CD4-positive, alpha-beta T cell (primary cell): ENCODE measurements at regions of chr22 and their contacts with region 1.

Region 1: GRCh38 chr22:40346178-40347118 is at the start of gene ADSL:
- DNase-seq: peak; percentile 72 to 91 (median 80)
- ATAC-seq: peak; percentile 74
- H3K4me3 ChIP-seq: peak within 1 kb of the TSS; percentile 91
- H3K4me3 Mint-ChIP-seq: peak within 1 kb of the TSS; percentile 96
- H3K27ac ChIP-seq: peak within 1 kb of the TSS; percentile 81 to 89
- H3K27ac Mint-ChIP-seq: peak within 1 kb of the TSS; percentile 98
- H3K4me1 ChIP-seq: peaks cover 65% of the 10 kb centered on the region
- H3K4me1 Mint-ChIP-seq: peaks cover 52% of the 10 kb centered on the region
- H3K27me3 ChIP-seq: no peaks in the 10 kb centered on the region
- H3K27me3 Mint-ChIP-seq: no peaks in the 10 kb centered on the region
- CTCF ChIP-seq: no peak
- total RNA-seq, gene ADSL: 62.9 to 75.3 TPM

Region 2: GRCh38 chr22:40161194-40161593 is 185.3 kb before region 1 on chr22:
- CTCF ChIA-PET with region 1: interaction called, 4 read pairs
- POLR2A ChIA-PET with region 1: no interaction called
- intact Hi-C with region 1: loop called in 1 of 2 experiments (anchors 5 kb)
- DNase-seq: no peak
- ATAC-seq: no peak
- H3K4me3 ChIP-seq: no peak overlapping the region
- H3K4me3 Mint-ChIP-seq: no peak overlapping the region
- H3K27ac ChIP-seq: no peak overlapping the region
- H3K27ac Mint-ChIP-seq: peak overlapping the region; percentile 50
- H3K4me1 ChIP-seq: no peaks in the 10 kb centered on the region
- H3K4me1 Mint-ChIP-seq: peaks cover 25% of the 10 kb centered on the region
- H3K27me3 ChIP-seq: no peaks in the 10 kb centered on the region
- H3K27me3 Mint-ChIP-seq: no peaks in the 10 kb centered on the region
- CTCF ChIP-seq: no peak

Region 3: DNA sequence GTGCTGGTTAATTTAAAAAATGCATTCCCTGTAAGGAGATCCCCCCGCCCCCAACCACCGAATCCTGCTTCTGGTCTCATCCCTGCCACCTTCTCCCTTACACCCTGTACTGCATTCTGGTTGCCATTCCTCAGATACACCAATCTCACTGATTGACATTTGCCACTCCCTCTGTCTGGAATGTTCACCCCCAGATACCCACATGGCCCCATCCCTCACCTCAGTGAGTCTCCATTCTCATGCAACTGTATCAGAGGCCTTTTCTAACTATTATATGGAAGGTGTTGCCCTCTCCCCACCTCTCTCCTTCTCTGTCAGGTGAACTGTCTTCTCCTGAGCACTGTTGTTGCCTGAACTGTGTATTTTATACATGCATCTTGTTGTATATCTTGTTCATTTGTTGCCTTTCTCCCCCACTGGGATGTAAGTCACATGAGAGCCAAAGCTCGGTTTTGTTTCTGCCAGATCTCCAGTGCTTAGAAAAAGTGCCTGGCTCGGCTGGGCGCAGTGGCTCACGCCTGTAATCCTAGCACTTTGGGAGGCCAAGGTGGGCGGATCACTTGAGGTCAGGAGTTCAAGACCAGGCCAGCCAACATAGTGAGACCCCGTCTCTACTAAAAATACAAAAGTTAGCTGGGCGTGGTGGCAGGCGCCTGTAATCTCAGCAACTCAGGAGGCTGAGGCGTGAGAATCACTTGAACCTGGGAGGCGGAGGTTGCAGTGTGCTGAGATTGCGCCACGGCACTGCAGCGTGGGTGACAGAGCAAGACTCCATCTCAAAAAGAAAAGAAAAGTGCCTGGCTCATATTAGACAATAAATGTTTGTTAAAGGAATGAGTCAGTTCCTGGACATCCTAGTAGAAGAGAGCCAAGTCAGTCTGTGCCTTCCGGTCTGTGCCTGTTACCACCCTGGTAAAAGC is 107.8 kb before region 1 on chr22:
- CTCF ChIA-PET with region 1: interaction called, 13 read pairs
- POLR2A ChIA-PET with region 1: interaction called, 3 read pairs
- intact Hi-C with region 1: no loop called
- DNase-seq: peak in 3 of 14 experiments; percentile 31 to 40 (median 34)
- ATAC-seq: peak; percentile 13
- H3K4me3 ChIP-seq: no peak overlapping the region
- H3K4me3 Mint-ChIP-seq: peak overlapping the region; percentile 64
- H3K27ac ChIP-seq: peak overlapping the region; percentile 7 to 22
- H3K27ac Mint-ChIP-seq: peak overlapping the region; percentile 85
- H3K4me1 ChIP-seq: peaks cover 71% of the 10 kb centered on the region
- H3K4me1 Mint-ChIP-seq: peaks cover 98% of the 10 kb centered on the region
- H3K27me3 ChIP-seq: no peaks in the 10 kb centered on the region
- H3K27me3 Mint-ChIP-seq: no peaks in the 10 kb centered on the region
- CTCF ChIP-seq: no peak

Region 4: GRCh38 chr22:40276996-40277823 is 69.2 kb before region 1 on chr22:
- CTCF ChIA-PET with region 1: interaction called, 10 read pairs
- POLR2A ChIA-PET with region 1: interaction called, 5 read pairs
- intact Hi-C with region 1: loop called in 1 of 2 experiments (anchors 5 kb)
- DNase-seq: no peak
- ATAC-seq: no peak
- H3K4me3 ChIP-seq: peak overlapping the region; percentile 53
- H3K4me3 Mint-ChIP-seq: peak overlapping the region; percentile 51
- H3K27ac ChIP-seq: peak overlapping the region in 1 of 2 donors; percentile 49
- H3K27ac Mint-ChIP-seq: peak overlapping the region; percentile 92
- H3K4me1 ChIP-seq: peaks cover 24% of the 10 kb centered on the region
- H3K4me1 Mint-ChIP-seq: peaks cover 62% of the 10 kb centered on the region
- H3K27me3 ChIP-seq: no peaks in the 10 kb centered on the region
- H3K27me3 Mint-ChIP-seq: no peaks in the 10 kb centered on the region
- CTCF ChIP-seq: no peak

Region 5: DNA sequence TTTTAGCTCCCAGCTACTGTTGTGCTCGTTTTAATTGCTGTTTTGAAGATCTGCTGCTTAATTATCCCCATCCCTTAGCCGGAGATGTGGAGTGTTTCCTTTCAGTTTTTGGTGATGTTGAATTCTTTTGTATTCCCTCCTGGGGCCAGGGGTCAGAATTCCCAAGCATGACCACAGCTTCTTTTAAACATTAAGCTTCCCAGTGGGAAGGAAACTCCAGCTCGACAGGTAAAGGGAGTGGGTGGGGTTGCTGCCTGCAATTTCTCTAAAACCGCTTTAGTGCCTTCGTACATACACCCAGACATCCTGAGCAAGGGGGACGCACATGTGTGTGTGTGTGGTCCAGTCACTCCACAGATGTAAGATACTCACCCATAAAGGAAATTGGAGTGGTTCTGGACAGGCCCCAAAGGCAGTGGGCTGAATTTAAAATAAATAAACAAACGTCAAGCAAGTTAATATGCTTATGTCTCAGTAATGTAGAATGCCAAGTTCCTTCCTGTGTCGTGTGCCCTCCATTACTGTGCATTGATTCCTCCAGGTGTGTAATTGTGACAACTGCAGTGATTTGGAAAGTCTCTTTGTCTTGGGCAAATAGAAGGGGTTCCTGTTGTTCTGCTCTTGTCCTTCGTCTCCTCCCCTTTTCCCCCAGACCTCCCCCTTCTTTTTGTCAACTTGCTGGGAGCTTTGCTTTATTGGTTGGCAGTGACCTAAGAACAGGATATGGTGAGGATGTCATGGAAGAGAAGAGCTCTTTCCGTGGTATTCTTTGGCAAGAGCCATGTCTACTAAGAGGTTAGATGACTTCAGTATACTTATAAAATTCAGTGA is 19.3 kb before region 1 on chr22:
- CTCF ChIA-PET with region 1: interaction called, 29 read pairs
- POLR2A ChIA-PET with region 1: interaction called, 75 read pairs
- intact Hi-C with region 1: loop called (anchors 1 to 2 kb)
- DNase-seq: peak in 4 of 14 experiments; percentile 24 to 73 (median 45)
- ATAC-seq: peak; percentile 25
- H3K4me3 ChIP-seq: no peak overlapping the region
- H3K4me3 Mint-ChIP-seq: peak overlapping the region; percentile 75
- H3K27ac ChIP-seq: peak overlapping the region; percentile 52 to 71
- H3K27ac Mint-ChIP-seq: peak overlapping the region; percentile 97
- H3K4me1 ChIP-seq: peaks cover 65% of the 10 kb centered on the region
- H3K4me1 Mint-ChIP-seq: peaks cover 100% of the 10 kb centered on the region
- H3K27me3 ChIP-seq: no peaks in the 10 kb centered on the region
- H3K27me3 Mint-ChIP-seq: no peaks in the 10 kb centered on the region
- CTCF ChIP-seq: no peak

Region 6: GRCh38 chr22:42070517-42071422 is 1724.3 kb after region 1 on chr22 and contains the start of gene NAGA:
- CTCF ChIA-PET with region 1: no interaction called
- POLR2A ChIA-PET with region 1: no interaction called
- intact Hi-C with region 1: no loop called
- DNase-seq: peak; percentile 75 to 96 (median 86)
- ATAC-seq: peak; percentile 98
- H3K4me3 ChIP-seq: peak within 1 kb of the TSS; percentile 84
- H3K4me3 Mint-ChIP-seq: peak within 1 kb of the TSS; percentile 95
- H3K27ac ChIP-seq: peak within 1 kb of the TSS; percentile 74 to 76
- H3K27ac Mint-ChIP-seq: peak within 1 kb of the TSS; percentile 95
- H3K4me1 ChIP-seq: peaks cover 55% of the 10 kb centered on the region
- H3K4me1 Mint-ChIP-seq: peaks cover 59% of the 10 kb centered on the region
- H3K27me3 ChIP-seq: no peaks in the 10 kb centered on the region
- H3K27me3 Mint-ChIP-seq: no peaks in the 10 kb centered on the region
- CTCF ChIP-seq: no peak
- total RNA-seq, gene NAGA: 2.6 to 3.2 TPM